Endothelial cell of umbilical vein (primary cell): ENCODE measurements at regions of chr9 and their contacts with region 1.

Region 1: GRCh38 chr9:112157087-112157486 is 18.0 kb downstream of the SUSD1 start:
- DNase-seq: no peak
- H3K4me3 ChIP-seq: no peak overlapping the region
- H3K27ac ChIP-seq: no peak overlapping the region
- H3K4me1 ChIP-seq: no peaks in the 10 kb centered on the region
- H3K27me3 ChIP-seq: no peaks in the 10 kb centered on the region
- CTCF ChIP-seq: no peak
- POLR2A ChIP-seq: no peak

Region 2: DNA sequence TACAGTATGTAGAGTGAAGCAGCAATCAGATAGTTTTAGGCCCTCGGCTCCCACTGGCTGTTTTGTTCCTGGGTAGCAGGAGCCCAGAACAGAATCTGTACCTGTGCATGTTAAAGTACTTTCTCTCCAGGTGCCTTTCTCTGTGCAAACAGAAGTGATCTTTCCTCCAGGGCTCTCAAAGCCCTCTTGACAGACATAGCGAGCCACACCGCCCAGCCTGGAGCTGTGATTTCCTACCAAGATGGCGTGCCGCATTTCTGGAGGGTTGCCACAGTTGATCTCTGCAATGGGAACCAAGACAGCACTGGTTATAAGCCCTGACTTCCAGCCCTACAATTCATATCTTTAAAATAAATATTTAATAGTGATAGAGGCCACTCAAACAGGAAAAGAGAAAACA is 32.9 kb before region 1 on chr9:
- CTCF ChIA-PET with region 1: no interaction called
- POLR2A ChIA-PET with region 1: no interaction called
- dilution Hi-C with region 1: no loop called
- intact Hi-C with region 1: no loop called
- DNase-seq: no peak
- H3K4me3 ChIP-seq: no peak overlapping the region
- H3K27ac ChIP-seq: no peak overlapping the region
- H3K4me1 ChIP-seq: no peaks in the 10 kb centered on the region
- H3K27me3 ChIP-seq: no peaks in the 10 kb centered on the region
- CTCF ChIP-seq: no peak
- POLR2A ChIP-seq: no peak

Region 3: GRCh38 chr9:112135706-112136105 is 21.4 kb before region 1 on chr9:
- CTCF ChIA-PET with region 1: no interaction called
- POLR2A ChIA-PET with region 1: interaction called, 11 read pairs
- dilution Hi-C with region 1: no loop called
- intact Hi-C with region 1: no loop called
- DNase-seq: no peak
- H3K4me3 ChIP-seq: no peak overlapping the region
- H3K27ac ChIP-seq: no peak overlapping the region
- H3K4me1 ChIP-seq: no peaks in the 10 kb centered on the region
- H3K27me3 ChIP-seq: no peaks in the 10 kb centered on the region
- CTCF ChIP-seq: no peak
- POLR2A ChIP-seq: no peak